Activated CD4-positive, alpha-beta T cell treated with anti-CD3 and anti-CD28 coated beads, Interleukin-2, amount 10 ng/mL, durations not matched to agents 24 days and 14 days (primary cell): ENCODE measurements at regions of chr2 and their contacts with region 1.

Region 1: GRCh38 chr2:177263451-177264208 is 897 bp downstream of the NFE2L2 start:
- DNase-seq: peak; percentile 99
- H3K4me3 Mint-ChIP-seq: peak overlapping the region; percentile 89
- H3K27ac Mint-ChIP-seq: peak overlapping the region; percentile 100
- H3K4me1 Mint-ChIP-seq: peaks cover 53% of the 10 kb centered on the region
- H3K27me3 Mint-ChIP-seq: no peaks in the 10 kb centered on the region

Region 2: GRCh38 chr2:177212106-177212890 is 51.3 kb before region 1 on chr2 and contains the start of gene HNRNPA3:
- intact Hi-C with region 1: loop called (anchors 1 kb)
- DNase-seq: peak; percentile 100
- H3K4me3 Mint-ChIP-seq: peak within 1 kb of the TSS; percentile 94
- H3K27ac Mint-ChIP-seq: peak within 1 kb of the TSS; percentile 98
- H3K4me1 Mint-ChIP-seq: peaks cover 40% of the 10 kb centered on the region
- H3K27me3 Mint-ChIP-seq: no peaks in the 10 kb centered on the region
- total RNA-seq, gene HNRNPA3: 333 and 336 TPM in 2 replicates

Region 3: DNA sequence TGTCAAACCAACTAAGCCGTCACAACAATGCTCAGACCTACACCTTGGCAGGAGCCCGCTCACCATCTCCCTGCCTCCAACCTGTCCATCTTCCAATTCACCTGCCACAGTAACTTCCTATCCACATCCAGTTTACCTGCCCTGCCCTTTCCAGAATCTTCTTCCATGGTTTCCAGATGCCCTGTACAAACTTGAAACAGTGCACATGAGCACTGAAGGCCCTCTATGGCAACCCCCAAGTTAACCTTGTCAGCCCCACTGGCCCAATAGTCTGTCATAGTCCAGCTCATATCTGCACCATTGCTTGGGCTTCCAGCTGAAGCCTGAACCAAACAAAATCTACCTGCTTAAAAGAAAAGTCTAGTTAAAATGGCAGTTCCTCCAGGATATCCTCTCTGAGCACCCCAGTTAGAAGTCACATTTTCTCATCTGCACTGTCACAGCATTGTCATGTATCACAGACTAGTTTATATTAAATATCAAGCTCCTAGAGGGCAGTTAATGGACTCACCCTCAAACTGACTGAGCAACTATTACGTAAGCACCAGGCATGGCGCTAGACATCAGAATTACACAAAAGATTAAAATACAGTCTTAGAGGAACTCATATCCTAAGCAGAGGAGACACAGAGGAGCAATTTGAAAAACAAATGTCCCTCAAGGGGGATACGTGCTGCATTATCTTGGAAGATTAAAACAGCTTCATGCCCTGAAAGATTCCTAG is 10.7 kb before region 1 on chr2:
- intact Hi-C with region 1: loop called (anchors 1 kb)
- DNase-seq: peak; percentile 60
- H3K4me3 Mint-ChIP-seq: peak overlapping the region; percentile 34
- H3K27ac Mint-ChIP-seq: peak overlapping the region; percentile 85
- H3K4me1 Mint-ChIP-seq: peaks cover 71% of the 10 kb centered on the region
- H3K27me3 Mint-ChIP-seq: no peaks in the 10 kb centered on the region

Region 4: GRCh38 chr2:177332041-177332991 is 68.7 kb after region 1 on chr2:
- intact Hi-C with region 1: loop called (anchors 1 kb)
- DNase-seq: peak; percentile 88
- H3K4me3 Mint-ChIP-seq: no peak overlapping the region
- H3K27ac Mint-ChIP-seq: no peak overlapping the region
- H3K4me1 Mint-ChIP-seq: peaks cover 15% of the 10 kb centered on the region
- H3K27me3 Mint-ChIP-seq: no peaks in the 10 kb centered on the region

Region 5: DNA sequence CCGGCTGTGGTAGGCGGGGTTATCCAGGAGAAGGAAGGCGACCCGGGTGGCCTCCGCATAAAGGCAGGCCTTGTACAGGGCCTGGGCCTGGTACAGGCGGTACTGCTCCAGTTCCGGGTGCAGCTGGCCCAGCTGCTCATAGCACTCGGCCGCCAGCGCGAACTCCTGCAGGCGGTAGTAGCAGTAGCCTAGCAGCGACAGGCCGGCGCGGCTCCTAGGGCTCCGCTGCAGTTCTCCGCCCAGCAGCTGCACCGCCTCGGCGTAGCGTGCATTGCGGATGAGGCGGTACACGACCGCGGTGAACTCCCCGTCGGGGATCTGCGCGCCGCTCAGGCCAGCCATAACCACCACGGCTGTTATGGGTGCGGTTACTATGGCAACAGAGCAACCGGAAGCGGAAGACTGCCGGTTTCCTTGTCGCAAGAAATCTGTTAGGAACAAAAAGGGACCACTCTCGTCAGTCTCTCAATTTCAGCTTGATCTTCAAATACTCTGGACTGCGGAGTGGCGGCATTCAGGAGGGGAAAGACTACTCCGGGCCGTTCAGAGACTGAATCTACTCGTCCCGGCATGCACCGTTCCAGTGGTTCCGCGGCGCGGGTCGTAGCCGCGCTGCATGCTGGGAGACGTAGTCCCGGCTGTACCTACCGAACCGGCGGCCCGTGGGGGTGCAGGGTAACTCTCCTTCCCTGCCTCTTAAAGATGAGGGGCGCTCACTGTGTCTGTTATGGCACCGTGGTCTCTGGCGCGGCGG is 289.0 kb after region 1 on chr2:
- intact Hi-C with region 1: loop called (anchors 2 kb)
- DNase-seq: peak; percentile 98
- H3K4me3 Mint-ChIP-seq: peak overlapping the region; percentile 95
- H3K27ac Mint-ChIP-seq: peak overlapping the region; percentile 100
- H3K4me1 Mint-ChIP-seq: peaks cover 11% of the 10 kb centered on the region
- H3K27me3 Mint-ChIP-seq: peaks cover 7% of the 10 kb centered on the region